ENCODE measurements at regions of chr20 and their contacts with region 1.

Region 1: DNA sequence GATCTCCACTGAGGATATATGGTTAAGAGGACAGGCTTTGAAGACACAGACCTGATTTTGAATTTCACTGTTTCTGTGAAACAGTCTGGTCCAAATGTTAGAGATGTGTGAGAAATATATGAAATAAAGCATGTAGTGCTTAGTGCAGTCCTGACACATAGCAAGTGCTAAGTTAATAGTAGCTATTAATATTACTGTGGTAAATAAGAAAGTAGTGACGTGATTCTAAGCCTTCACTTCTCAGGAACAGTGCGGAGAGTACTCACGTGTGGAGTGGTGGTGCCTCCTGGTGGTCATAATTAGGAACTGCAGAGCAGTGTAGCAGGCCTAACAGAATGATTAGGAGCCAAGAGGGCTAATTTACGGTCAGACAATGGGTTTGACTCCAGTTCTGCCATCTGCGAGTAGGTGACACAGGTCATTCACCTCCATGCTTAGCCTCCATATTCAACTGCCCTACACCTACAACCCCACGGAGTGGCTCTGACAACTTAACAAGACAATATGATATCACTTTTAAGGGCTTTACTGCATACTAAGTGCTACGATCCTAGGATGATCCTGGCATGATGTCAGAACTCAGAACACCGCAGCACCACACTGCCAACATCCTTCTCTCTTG is 106.2 kb downstream of the JPH2 start:
- H3K4me3 ChIP-seq: no peak overlapping the region
- H3K27ac ChIP-seq: no peak overlapping the region
- H3K4me1 ChIP-seq: no peaks in the 10 kb centered on the region
- CTCF ChIP-seq: peak; percentile 92

Region 2: DNA sequence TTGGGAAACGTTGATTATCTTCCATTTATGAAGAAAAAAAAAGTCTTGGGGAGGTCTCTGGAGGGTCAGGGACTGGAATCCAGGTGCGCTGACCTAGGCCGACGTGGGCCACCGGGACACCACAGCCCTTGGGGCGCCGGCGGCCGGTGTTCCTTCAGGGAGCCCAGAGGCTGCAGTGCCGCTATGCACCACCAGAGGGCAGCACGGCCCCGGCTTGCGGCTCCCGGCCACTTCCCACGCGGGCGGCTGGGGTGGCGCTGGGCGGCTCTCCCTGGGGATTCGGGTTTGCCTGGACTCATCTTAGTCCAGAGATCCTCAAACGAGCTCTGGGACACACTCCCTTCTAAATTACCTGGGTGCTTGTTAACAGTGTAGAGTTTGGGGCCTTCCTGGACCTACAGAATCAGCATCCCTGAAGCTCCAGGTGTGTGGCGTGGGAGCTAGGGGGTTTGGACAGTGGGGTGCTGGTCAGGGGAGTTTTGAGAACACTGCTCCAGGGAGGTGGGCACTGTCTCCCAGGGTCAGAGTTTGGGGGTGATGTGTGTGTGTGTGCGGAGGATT is 330.9 kb before region 1 on chr20:
- CTCF ChIA-PET with region 1: interaction called, 105 read pairs
- POLR2A ChIA-PET with region 1: no interaction called
- H3K4me3 ChIP-seq: no peak overlapping the region
- H3K27ac ChIP-seq: no peak overlapping the region
- H3K4me1 ChIP-seq: peaks cover 9% of the 10 kb centered on the region
- CTCF ChIP-seq: peak; percentile 86

Region 3: GRCh38 chr20:43840382-43841070 is 240.2 kb before region 1 on chr20:
- CTCF ChIA-PET with region 1: interaction called, 10 read pairs
- POLR2A ChIA-PET with region 1: no interaction called
- H3K4me3 ChIP-seq: no peak overlapping the region
- H3K27ac ChIP-seq: no peak overlapping the region
- H3K4me1 ChIP-seq: no peaks in the 10 kb centered on the region
- CTCF ChIP-seq: peak; percentile 19; the same call in 1 of the 2 replicates

Region 4: GRCh38 chr20:44038681-44039123 is 42.1 kb before region 1 on chr20:
- CTCF ChIA-PET with region 1: no interaction called
- POLR2A ChIA-PET with region 1: no interaction called
- H3K4me3 ChIP-seq: no peak overlapping the region
- H3K27ac ChIP-seq: no peak overlapping the region
- H3K4me1 ChIP-seq: no peaks in the 10 kb centered on the region
- CTCF ChIP-seq: no peak

Region 5: DNA sequence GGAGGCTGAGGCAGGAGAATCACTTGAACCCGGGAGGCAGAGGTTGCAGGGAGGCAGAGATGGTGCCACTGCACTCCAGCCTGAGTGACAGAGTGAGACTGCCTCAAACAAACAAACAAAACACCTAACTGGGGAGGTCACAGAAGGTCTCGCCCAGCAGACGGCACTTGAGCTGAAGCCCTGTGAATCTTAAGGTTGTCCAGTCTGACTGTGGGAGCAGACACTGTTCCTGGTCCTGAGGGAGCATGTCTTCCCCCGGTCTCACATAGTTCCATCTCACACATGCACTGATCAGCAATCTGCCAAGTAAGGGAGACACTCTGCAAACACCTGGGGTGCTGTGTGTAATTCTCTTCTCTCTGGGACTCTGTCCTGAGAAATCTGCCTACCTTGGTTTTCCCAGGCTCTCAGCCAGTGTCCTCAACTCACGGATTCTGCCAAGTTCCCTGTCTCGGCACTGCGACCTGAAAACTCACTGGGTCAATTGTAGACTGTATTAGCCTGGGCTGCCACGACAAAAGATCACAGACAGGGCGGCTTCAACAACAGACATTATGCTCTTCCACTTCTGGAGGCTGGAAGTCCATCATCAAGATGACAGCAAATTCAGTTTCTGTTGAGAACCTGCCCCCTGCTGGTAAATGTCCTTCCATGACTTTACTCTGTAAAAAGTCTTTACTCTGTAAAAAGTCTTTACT is 11.9 kb after region 1 on chr20:
- CTCF ChIA-PET with region 1: interaction called, 14 read pairs
- POLR2A ChIA-PET with region 1: no interaction called
- H3K4me3 ChIP-seq: no peak overlapping the region
- H3K27ac ChIP-seq: no peak overlapping the region
- H3K4me1 ChIP-seq: no peaks in the 10 kb centered on the region
- CTCF ChIP-seq: no peak

Measured in HEK293 (cell line).